ENCODE measurements at regions of chr11 and their contacts with region 1.

Region 1: GRCh38 chr11:57657194-57658022 is at the start of gene CLP1:
- DNase-seq: peak; percentile 99 to 100 (median 100)

Region 2: GRCh38 chr11:57150454-57150917 is 506.9 kb before region 1 on chr11:
- intact Hi-C with region 1: no loop called
- DNase-seq: no peak

Region 3: GRCh38 chr11:57667736-57668435 is 10.5 kb after region 1 on chr11 and contains the start of gene ZDHHC5:
- intact Hi-C with region 1: loop called (anchors 1 kb)
- DNase-seq: peak; percentile 98 to 100 (median 100)

Measured in posterior cingulate gyrus (tissue), 11 donors.